ENCODE measurements at regions of chr5 and their contacts with region 1.

Region 1: DNA sequence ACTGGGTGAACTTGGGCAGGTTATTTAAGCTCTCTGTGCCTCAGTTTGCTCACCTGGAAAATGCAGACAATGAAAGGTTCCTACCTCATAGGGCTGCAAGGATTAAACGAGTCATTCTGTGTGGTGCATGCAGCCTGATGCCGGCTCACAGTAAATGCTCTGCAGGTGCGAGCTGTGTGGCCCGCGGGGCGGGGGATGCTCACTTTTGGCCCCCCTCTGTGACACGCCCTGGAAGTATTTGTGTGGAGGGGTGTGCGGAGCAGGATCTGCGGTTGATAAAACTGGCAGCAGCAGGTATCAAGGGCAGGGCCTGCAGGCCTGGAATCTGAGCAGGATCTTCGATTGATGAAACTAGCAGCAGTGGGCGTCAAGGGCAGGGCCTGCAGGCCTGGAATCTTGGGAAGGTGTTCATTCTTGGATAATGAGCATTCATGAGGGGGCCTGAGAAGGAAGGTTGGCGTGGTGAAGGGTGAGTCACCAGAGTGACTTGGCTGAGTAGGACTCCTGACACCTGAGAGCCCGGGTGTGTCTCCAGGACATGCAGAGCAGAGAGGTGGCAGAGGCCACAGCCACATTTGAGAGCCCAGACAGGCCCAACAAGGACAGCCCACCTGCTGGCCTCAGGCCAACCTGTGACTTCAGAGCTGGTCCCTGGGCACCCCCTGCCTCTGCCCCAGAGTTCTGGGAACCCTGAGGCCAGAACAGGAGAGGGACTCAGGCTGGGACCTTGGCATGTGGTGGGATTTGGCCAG is 11.9 kb downstream of the UNC5A start:
- DNase-seq: peak; percentile 96 to 99
- H3K4me3 ChIP-seq: peak overlapping the region; percentile 56; the same call in 1 of the 2 replicates
- H3K27ac ChIP-seq: peak overlapping the region; percentile 99
- H3K4me1 ChIP-seq: peaks cover 40% of the 10 kb centered on the region
- H3K27me3 ChIP-seq: no peaks in the 10 kb centered on the region
- CTCF ChIP-seq: no peak

Region 2: DNA sequence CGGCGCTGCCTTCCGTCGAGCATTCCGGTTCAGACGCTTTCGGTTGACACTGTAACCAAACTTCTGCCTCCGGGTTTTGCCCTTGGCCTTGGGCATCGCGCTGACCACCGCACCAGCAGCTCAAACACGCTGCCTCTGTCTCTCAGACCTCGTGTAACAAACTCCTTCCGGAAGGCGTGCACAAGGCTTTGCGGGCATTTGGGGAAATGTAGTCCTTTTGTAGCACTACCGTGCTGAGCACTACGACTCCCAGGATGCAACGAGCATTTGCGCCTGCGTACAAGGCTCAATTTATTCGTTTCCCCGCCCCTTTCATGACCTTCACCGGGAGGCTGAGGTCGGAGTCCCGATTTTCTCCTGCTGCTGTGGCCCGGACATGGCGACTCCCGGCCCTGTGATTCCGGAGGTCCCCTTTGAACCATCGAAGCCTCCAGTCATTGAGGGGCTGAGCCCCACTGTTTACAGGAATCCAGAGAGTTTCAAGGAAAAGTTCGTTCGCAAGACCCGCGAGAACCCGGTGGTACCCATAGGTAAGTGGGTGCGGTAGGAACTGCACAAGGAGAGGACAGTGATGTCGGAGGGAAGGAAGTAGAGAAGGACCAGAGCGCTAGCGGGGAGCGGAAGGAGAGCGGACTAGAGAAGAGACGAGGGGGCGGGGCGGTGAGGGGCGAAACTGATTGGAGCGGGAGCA is 433.6 kb before region 1 on chr5 and contains the starts of genes HIGD2A and NOP16:
- CTCF ChIA-PET with region 1: no interaction called
- POLR2A ChIA-PET with region 1: no interaction called
- intact Hi-C with region 1: loop called (anchors 10 kb)
- DNase-seq: peak; percentile 95 to 98
- H3K4me3 ChIP-seq: peak within 1 kb of the TSS; percentile 74
- H3K27ac ChIP-seq: peak within 1 kb of the TSS; percentile 71
- H3K4me1 ChIP-seq: peaks cover 22% of the 10 kb centered on the region
- H3K27me3 ChIP-seq: no peaks in the 10 kb centered on the region
- CTCF ChIP-seq: no peak
- total RNA-seq, gene HIGD2A: 133 and 149 TPM in 2 replicates
- total RNA-seq, gene NOP16: 31.5 and 35.8 TPM in 2 replicates

Region 3: GRCh38 chr5:176537608-176538504 is 284.4 kb before region 1 on chr5:
- CTCF ChIA-PET with region 1: no interaction called
- POLR2A ChIA-PET with region 1: interaction called, 16 read pairs
- intact Hi-C with region 1: loop called (anchors 5 kb)
- DNase-seq: peak; percentile 98 to 99
- H3K4me3 ChIP-seq: peak overlapping the region; percentile 99
- H3K27ac ChIP-seq: peak overlapping the region; percentile 79
- H3K4me1 ChIP-seq: peaks cover 33% of the 10 kb centered on the region
- H3K27me3 ChIP-seq: no peaks in the 10 kb centered on the region
- CTCF ChIP-seq: no peak

Region 4: GRCh38 chr5:176692839-176693476 is 129.3 kb before region 1 on chr5:
- CTCF ChIA-PET with region 1: no interaction called
- POLR2A ChIA-PET with region 1: no interaction called
- intact Hi-C with region 1: loop called (anchors 1 kb)
- DNase-seq: peak; percentile 59 to 68
- H3K4me3 ChIP-seq: peak overlapping the region; percentile 32; the same call in 1 of the 2 replicates
- H3K27ac ChIP-seq: peak overlapping the region; percentile 78
- H3K4me1 ChIP-seq: peaks cover 45% of the 10 kb centered on the region
- H3K27me3 ChIP-seq: no peaks in the 10 kb centered on the region
- CTCF ChIP-seq: no peak

Region 5: GRCh38 chr5:176844706-176845391 is 22.6 kb after region 1 on chr5:
- CTCF ChIA-PET with region 1: no interaction called
- POLR2A ChIA-PET with region 1: no interaction called
- intact Hi-C with region 1: loop called (anchors 2 kb)
- DNase-seq: peak; percentile 75 to 85
- H3K4me3 ChIP-seq: peak overlapping the region; percentile 27; the same call in 1 of the 2 replicates
- H3K27ac ChIP-seq: peak overlapping the region; percentile 72
- H3K4me1 ChIP-seq: peaks cover 27% of the 10 kb centered on the region
- H3K27me3 ChIP-seq: no peaks in the 10 kb centered on the region
- CTCF ChIP-seq: no peak

Measured in PC-9 (cell line).